HEK293T (cell line): ENCODE measurements at regions of chr5 and their contacts with region 1.

Region 1: GRCh38 chr5:98768160-98769005 is 5.1 kb upstream of the RGMB start:
- DNase-seq: peak; percentile 50

Region 2: DNA sequence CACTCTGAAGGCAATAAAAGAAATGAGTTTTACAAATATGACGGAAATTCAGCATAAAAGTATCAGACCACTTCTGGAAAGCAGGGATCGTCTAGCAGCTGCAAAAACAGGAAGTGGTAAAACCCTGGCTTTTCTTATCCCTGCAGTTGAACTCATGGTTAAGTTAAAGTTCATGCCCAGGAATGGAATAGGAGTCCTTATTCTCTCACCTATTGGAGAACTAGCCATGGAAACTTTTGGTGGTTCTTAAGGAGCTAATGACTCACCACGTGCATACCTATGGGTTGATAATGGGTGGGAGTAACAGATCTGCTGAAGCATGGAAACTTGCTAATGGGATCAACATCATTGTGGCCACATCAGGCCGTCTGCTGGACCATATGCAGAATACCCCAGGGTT is 88.4 kb before region 1 on chr5:
- CTCF ChIA-PET with region 1: no interaction called
- POLR2A ChIA-PET with region 1: no interaction called
- DNase-seq: no peak

Region 3: GRCh38 chr5:98786191-98786853 is 17.9 kb after region 1 on chr5:
- CTCF ChIA-PET with region 1: interaction called, 14 read pairs
- POLR2A ChIA-PET with region 1: interaction called, 3 read pairs
- DNase-seq: no peak